ENCODE measurements at regions of chr7 and their contacts with region 1.

Region 1: GRCh38 chr7:6435486-6436384 is 12.0 kb downstream of the DAGLB start:
- DNase-seq: peak; percentile 79 to 93 (median 87)
- ATAC-seq: peak; percentile 97
- H3K4me3 ChIP-seq: peak overlapping the region; percentile 3 to 50
- H3K4me3 Mint-ChIP-seq: peak overlapping the region; percentile 80
- H3K27ac ChIP-seq: peak overlapping the region; percentile 17 to 31
- H3K27ac Mint-ChIP-seq: peak overlapping the region; percentile 90
- H3K4me1 ChIP-seq: peaks cover 37% of the 10 kb centered on the region
- H3K4me1 Mint-ChIP-seq: peaks cover 43% of the 10 kb centered on the region
- H3K27me3 ChIP-seq: no peaks in the 10 kb centered on the region
- H3K27me3 Mint-ChIP-seq: no peaks in the 10 kb centered on the region
- CTCF ChIP-seq: peak; percentile 95

Region 2: DNA sequence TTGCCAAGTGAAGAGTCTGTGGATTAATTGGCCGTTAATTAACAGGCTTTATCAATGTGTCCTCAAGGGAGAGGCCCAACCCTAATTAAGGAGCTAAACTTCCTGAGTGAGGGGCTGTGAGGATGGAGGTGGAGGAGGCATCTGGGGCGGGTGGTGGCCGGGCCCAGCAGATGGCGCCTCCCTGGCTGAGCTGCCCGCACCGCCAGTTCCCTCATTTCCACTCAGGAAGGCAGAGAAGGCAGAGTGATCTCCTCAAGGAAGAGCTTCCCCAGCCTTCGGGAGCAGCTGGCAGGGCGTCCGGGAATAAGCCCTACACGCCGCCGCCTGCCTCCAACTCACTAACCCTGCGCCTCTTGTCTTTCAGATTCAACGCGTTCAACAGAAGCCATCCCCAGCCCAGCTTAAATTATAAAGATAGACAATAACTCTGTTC is 275.5 kb before region 1 on chr7:
- CTCF ChIA-PET with region 1: no interaction called
- POLR2A ChIA-PET with region 1: no interaction called
- intact Hi-C with region 1: loop called in 1 of 2 experiments (anchors 10 kb)
- DNase-seq: no peak
- ATAC-seq: no peak
- H3K4me3 ChIP-seq: no peak overlapping the region
- H3K4me3 Mint-ChIP-seq: no peak overlapping the region
- H3K27ac ChIP-seq: no peak overlapping the region
- H3K27ac Mint-ChIP-seq: no peak overlapping the region
- H3K4me1 ChIP-seq: no peaks in the 10 kb centered on the region
- H3K4me1 Mint-ChIP-seq: no peaks in the 10 kb centered on the region
- H3K27me3 ChIP-seq: no peaks in the 10 kb centered on the region
- H3K27me3 Mint-ChIP-seq: no peaks in the 10 kb centered on the region
- CTCF ChIP-seq: no peak

Region 3: GRCh38 chr7:6447581-6448199 is 12.0 kb after region 1 on chr7 and contains the start of gene DAGLB:
- CTCF ChIA-PET with region 1: interaction called, 15 read pairs
- POLR2A ChIA-PET with region 1: interaction called, 15 read pairs
- intact Hi-C with region 1: loop called in 1 of 2 experiments (anchors 1 kb)
- DNase-seq: peak; percentile 91 to 98 (median 97)
- ATAC-seq: peak; percentile 84
- H3K4me3 ChIP-seq: peak within 1 kb of the TSS; percentile 87 to 90
- H3K4me3 Mint-ChIP-seq: peak within 1 kb of the TSS; percentile 93
- H3K27ac ChIP-seq: peak within 1 kb of the TSS; percentile 68 to 73
- H3K27ac Mint-ChIP-seq: peak within 1 kb of the TSS; percentile 91
- H3K4me1 ChIP-seq: peaks cover 14% of the 10 kb centered on the region
- H3K4me1 Mint-ChIP-seq: peaks cover 38% of the 10 kb centered on the region
- H3K27me3 ChIP-seq: no peaks in the 10 kb centered on the region
- H3K27me3 Mint-ChIP-seq: no peaks in the 10 kb centered on the region
- CTCF ChIP-seq: no peak
- total RNA-seq, gene DAGLB: 35.4 to 40.4 TPM

Measured in CD8-positive, alpha-beta T cell (primary cell).